ENCODE measurements at regions of chr1 and their contacts with region 1.

Region 1: DNA sequence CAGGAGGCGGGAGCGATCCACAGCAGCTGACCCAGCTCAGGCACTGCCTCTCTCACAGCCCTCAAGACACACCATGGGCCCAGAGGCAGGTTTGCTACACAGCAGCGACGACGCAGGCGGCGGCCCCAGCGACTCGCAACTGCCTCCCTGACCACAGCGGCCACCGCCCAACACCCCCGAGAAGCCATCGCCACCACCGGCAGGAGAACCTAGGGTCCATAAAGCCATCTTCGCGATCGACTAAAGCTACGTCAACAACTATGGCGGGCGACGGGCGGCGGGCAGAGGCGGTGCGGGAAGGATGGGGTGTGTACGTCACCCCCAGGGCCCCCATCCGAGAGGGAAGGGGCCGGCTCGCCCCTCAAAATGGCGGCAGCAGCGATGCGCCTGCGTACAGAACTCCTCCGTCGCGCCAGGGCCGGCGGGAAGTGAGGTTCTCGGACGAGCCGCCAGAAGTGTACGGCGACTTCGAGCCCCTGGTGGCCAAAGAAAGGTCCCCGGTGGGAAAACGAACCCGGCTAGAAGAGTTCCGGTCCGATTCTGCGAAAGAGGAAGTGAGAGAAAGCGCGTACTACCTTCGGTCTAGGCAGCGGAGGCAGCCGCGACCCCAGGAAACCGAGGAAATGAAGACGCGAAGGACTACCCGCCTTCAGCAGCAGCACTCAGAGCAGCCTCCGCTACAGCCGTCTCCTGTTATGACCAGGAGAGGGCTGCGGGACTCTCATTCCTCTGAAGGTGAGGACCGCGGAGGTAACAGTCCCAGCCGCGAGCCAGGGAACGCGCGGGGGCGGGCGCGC is at the start of gene TOR1AIP1:
- DNase-seq: peak; percentile 99
- H3K4me3 Mint-ChIP-seq: peak within 1 kb of the TSS; percentile 86
- H3K27ac Mint-ChIP-seq: peak within 1 kb of the TSS; percentile 96
- H3K4me1 Mint-ChIP-seq: peaks cover 50% of the 10 kb centered on the region
- H3K27me3 Mint-ChIP-seq: no peaks in the 10 kb centered on the region
- total RNA-seq, gene TOR1AIP1: 57.4 to 57.7 TPM

Region 2: DNA sequence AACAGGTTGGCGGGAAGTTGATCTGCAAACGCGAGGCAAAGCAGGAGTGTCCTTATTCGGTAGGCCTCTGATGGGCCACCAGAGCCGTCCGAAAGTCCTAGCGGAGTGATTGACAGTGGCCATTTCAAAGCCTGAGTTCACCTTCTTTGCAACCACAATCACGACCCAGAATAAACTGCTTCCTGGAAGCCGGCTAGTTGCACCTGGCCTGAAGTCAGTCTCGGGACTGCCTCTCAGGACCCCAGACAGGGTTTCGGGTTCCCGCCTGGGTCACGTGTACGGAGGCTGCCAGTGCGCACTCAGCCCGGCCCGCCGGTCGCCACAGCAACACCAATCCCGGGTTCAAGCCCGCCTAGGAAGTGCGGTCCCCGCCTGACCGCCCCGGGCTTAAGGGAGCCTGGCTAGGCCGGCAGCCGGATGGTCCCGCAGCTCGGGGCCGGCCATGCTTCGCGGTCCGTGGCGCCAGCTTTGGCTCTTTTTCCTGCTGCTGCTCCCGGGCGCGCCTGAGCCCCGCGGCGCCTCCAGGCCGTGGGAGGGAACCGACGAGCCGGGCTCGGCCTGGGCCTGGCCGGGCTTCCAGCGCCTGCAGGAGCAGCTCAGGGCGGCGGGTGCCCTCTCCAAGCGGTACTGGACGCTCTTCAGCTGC is 800.6 kb before region 1 on chr1 and contains the start of gene TOR3A:
- CTCF ChIA-PET with region 1: no interaction called
- POLR2A ChIA-PET with region 1: no interaction called
- intact Hi-C with region 1: loop called (anchors 5 kb)
- DNase-seq: peak; percentile 89
- H3K4me3 Mint-ChIP-seq: peak within 1 kb of the TSS; percentile 89
- H3K27ac Mint-ChIP-seq: peak within 1 kb of the TSS; percentile 91
- H3K4me1 Mint-ChIP-seq: peaks cover 23% of the 10 kb centered on the region
- H3K27me3 Mint-ChIP-seq: no peaks in the 10 kb centered on the region
- total RNA-seq, gene TOR3A: 35.7 to 36.7 TPM

Region 3: GRCh38 chr1:179809506-179810366 is 72.7 kb before region 1 on chr1:
- CTCF ChIA-PET with region 1: interaction called, 11 read pairs
- POLR2A ChIA-PET with region 1: interaction called, 3 read pairs
- intact Hi-C with region 1: loop called (anchors 2 kb)
- DNase-seq: peak; percentile 75
- H3K4me3 Mint-ChIP-seq: no peak overlapping the region
- H3K27ac Mint-ChIP-seq: no peak overlapping the region
- H3K4me1 Mint-ChIP-seq: peaks cover 10% of the 10 kb centered on the region
- H3K27me3 Mint-ChIP-seq: no peaks in the 10 kb centered on the region

Region 4: DNA sequence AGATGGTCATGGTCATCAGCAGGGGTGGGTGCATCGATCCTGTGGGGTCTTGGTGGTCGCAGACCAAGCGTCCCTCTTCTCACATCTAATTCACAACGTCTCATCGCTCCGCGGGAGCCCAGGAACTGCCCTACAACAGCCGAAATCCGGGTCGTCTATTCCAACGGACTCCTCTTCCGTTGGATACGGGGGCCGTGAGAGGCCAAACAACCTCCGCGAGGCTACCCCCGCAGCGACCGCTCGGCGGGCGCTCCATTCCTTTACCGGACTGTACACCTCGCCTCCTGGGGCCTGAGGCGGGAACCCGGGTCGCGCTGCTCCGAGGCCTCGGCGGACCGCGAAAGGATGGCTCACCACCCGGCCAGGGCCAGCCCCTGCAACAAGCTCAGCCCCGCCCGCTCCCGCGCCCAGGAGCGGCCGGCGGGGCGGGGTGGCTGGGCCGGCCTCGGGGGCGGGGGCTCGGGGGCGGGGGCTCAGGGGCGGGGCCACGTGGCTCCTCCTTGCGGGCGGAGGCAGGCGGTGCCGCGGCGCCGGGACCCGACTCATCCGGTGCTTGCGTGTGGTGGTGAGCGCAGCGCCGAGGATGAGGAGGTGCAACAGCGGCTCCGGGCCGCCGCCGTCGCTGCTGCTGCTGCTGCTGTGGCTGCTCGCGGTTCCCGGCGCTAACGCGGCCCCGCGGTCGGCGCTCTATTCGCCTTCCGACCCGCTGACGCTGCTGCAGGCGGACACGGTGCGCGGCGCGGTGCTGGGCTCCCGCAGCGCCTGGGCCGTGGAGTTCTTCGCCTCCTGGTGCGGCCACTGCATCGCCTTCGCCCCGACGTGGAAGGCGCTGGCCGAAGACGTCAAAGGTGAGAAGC is 272.1 kb after region 1 on chr1 and contains the start of gene QSOX1:
- CTCF ChIA-PET with region 1: no interaction called
- POLR2A ChIA-PET with region 1: interaction called, 4 read pairs
- intact Hi-C with region 1: loop called (anchors 1 kb)
- DNase-seq: peak; percentile 93
- H3K4me3 Mint-ChIP-seq: peak within 1 kb of the TSS; percentile 89
- H3K27ac Mint-ChIP-seq: peak within 1 kb of the TSS; percentile 73
- H3K4me1 Mint-ChIP-seq: peaks cover 26% of the 10 kb centered on the region
- H3K27me3 Mint-ChIP-seq: no peaks in the 10 kb centered on the region
- total RNA-seq, gene QSOX1: 40.3 to 42.4 TPM

Region 5: DNA sequence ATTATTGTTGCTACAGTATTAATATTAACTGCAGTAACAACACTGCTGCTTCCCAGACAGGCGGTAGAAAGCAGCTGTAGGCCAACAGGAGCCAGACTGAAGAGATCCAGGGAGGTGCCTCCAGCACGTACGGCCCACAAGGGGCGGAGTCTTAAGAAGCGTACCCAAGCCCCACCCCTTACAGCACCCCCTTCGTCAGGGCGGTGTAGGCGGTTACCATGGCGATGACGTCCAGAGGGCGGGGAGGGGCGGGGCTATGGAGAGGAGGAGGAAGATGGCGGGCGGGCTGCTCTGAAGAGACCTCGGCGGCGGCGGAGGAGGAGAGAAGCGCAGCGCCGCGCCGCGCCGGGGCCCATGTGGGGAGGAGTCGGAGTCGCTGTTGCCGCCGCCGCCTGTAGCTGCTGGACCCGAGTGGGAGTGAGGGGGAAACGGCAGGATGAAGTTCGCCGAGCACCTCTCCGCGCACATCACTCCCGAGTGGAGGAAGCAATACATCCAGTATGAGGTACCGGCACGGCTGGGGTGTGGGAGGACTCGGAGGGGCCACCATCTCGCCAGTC is 749.4 kb after region 1 on chr1 and contains the start of gene XPR1:
- CTCF ChIA-PET with region 1: no interaction called
- POLR2A ChIA-PET with region 1: no interaction called
- intact Hi-C with region 1: loop called (anchors 2 kb)
- DNase-seq: peak; percentile 99
- H3K4me3 Mint-ChIP-seq: no peak within 1 kb of the TSS
- H3K27ac Mint-ChIP-seq: peak within 1 kb of the TSS; percentile 82
- H3K4me1 Mint-ChIP-seq: peaks cover 5% of the 10 kb centered on the region
- H3K27me3 Mint-ChIP-seq: no peaks in the 10 kb centered on the region
- total RNA-seq, gene XPR1: 17.9 to 18.4 TPM

Region 6: GRCh38 chr1:181397845-181398244 is 1515.4 kb after region 1 on chr1:
- CTCF ChIA-PET with region 1: no interaction called
- POLR2A ChIA-PET with region 1: no interaction called
- intact Hi-C with region 1: loop called (anchors 10 kb)
- DNase-seq: peak; percentile 39
- H3K4me3 Mint-ChIP-seq: no peak overlapping the region
- H3K27ac Mint-ChIP-seq: peak overlapping the region; percentile 53
- H3K4me1 Mint-ChIP-seq: peaks cover 38% of the 10 kb centered on the region
- H3K27me3 Mint-ChIP-seq: no peaks in the 10 kb centered on the region

Measured in activated CD4-positive, alpha-beta memory T cell treated with anti-CD3 and anti-CD28 coated beads for 36 hours (primary cell).